ENCODE measurements at regions of chr2 and their contacts with region 1.

Region 1: GRCh38 chr2:62410015-62410453 is 96.0 kb downstream of the TMEM17 start:
- DNase-seq: no peak
- H3K4me3 Mint-ChIP-seq: no peak overlapping the region
- H3K27ac Mint-ChIP-seq: no peak overlapping the region
- H3K4me1 Mint-ChIP-seq: peaks cover 3% of the 10 kb centered on the region
- H3K27me3 Mint-ChIP-seq: no peaks in the 10 kb centered on the region

Region 2: GRCh38 chr2:61911510-61911909 is 498.5 kb before region 1 on chr2:
- CTCF ChIA-PET with region 1: interaction called, 10 read pairs
- POLR2A ChIA-PET with region 1: no interaction called
- intact Hi-C with region 1: no loop called
- DNase-seq: no peak
- H3K4me3 Mint-ChIP-seq: no peak overlapping the region
- H3K27ac Mint-ChIP-seq: no peak overlapping the region
- H3K4me1 Mint-ChIP-seq: peaks cover 9% of the 10 kb centered on the region
- H3K27me3 Mint-ChIP-seq: no peaks in the 10 kb centered on the region

Region 3: GRCh38 chr2:61922714-61923113 is 487.3 kb before region 1 on chr2:
- CTCF ChIA-PET with region 1: interaction called, 10 read pairs
- POLR2A ChIA-PET with region 1: no interaction called
- intact Hi-C with region 1: loop called (anchors 1 kb)
- DNase-seq: no peak
- H3K4me3 Mint-ChIP-seq: no peak overlapping the region
- H3K27ac Mint-ChIP-seq: no peak overlapping the region
- H3K4me1 Mint-ChIP-seq: no peaks in the 10 kb centered on the region
- H3K27me3 Mint-ChIP-seq: no peaks in the 10 kb centered on the region

Region 4: DNA sequence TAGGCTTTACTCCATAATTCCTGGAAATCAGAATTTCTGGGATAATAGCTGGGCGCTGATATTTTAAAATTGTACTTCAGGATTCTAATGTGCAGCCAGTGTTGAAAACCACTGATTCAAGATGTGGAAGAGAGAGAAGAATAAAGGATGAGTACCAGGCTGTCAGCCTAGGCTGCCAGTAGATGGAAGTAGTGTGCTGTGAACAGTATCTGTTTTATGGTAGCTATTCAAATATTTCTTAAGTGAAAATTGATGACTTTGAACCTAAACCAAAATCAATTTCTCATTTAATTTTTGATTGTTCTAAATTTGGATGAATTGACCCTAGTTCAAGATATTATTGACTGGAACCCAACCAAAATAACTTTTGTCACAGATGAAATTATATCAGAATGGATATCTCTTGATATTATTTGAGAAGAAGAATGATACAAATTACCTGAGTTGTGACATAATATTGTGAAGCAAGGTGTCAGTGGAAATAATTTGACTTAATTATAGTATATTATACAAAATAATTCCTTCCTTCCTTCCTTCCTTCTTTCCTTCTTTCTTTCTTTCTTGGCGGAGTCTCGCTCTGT is 416.5 kb before region 1 on chr2:
- CTCF ChIA-PET with region 1: interaction called, 22 read pairs
- POLR2A ChIA-PET with region 1: no interaction called
- intact Hi-C with region 1: loop called (anchors 1 kb)
- DNase-seq: peak; percentile 12
- H3K4me3 Mint-ChIP-seq: no peak overlapping the region
- H3K27ac Mint-ChIP-seq: no peak overlapping the region
- H3K4me1 Mint-ChIP-seq: no peaks in the 10 kb centered on the region
- H3K27me3 Mint-ChIP-seq: no peaks in the 10 kb centered on the region

Region 5: GRCh38 chr2:63104482-63104881 is 694.4 kb after region 1 on chr2:
- CTCF ChIA-PET with region 1: no interaction called
- POLR2A ChIA-PET with region 1: no interaction called
- intact Hi-C with region 1: no loop called
- DNase-seq: no peak
- H3K4me3 Mint-ChIP-seq: no peak overlapping the region
- H3K27ac Mint-ChIP-seq: no peak overlapping the region
- H3K4me1 Mint-ChIP-seq: no peaks in the 10 kb centered on the region
- H3K27me3 Mint-ChIP-seq: peaks cover 1% of the 10 kb centered on the region